Caco-2 (cell line): ENCODE measurements at regions of chr4 and their contacts with region 1.

Region 1: DNA sequence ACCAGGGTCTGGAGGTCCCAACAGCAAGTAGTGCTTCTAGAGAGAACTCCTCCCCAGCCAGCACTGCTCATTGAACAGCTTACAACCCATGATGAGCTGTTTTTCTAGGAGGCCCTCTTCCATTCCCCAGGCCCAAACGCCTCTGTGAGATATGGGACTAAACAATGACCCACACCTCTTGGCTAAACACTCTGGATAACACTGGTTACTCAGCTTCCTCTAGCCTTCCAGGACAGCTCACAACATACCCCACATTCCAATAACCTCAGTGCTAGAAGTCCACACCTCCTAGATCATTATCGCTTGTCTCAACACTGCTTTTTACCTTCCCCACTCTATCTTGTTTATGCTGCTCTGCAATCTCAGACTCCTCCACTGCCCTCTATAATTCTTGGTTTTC is 35.4 kb upstream of the PGRMC2 start:
- DNase-seq: peak; percentile 73 to 82
- H3K4me3 ChIP-seq: no peak overlapping the region
- H3K4me3 Mint-ChIP-seq: no peak overlapping the region
- H3K27ac Mint-ChIP-seq: no peak overlapping the region
- H3K4me1 ChIP-seq: peaks cover 43% of the 10 kb centered on the region
- H3K4me1 Mint-ChIP-seq: peaks cover 5% of the 10 kb centered on the region
- H3K27me3 ChIP-seq: no peaks in the 10 kb centered on the region
- H3K27me3 Mint-ChIP-seq: no peaks in the 10 kb centered on the region
- CTCF ChIP-seq: no peak

Region 2: DNA sequence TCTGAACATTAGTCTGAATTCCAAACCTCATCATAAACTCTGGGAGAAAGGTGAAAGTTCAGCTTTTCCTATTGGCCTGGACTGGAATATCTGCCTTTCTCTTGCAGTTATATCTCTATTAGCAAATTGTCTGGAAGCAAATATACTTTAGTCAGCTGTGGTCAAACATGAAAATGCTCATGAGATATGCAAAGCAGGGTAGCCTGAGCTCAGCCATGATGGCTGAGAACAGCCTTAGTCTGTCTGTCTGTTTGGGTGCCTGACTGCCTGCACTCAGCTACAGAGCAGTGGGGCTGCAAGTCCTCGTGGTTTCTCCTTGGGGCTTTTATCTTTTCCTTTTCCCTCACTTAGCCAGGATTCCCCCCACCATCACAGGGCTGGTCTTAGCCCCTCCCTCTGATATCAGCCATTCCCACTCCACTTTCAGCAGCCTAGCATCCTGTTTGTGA is 15.8 kb before region 1 on chr4:
- CTCF ChIA-PET with region 1: no interaction called
- POLR2A ChIA-PET with region 1: interaction called, 4 read pairs
- intact Hi-C with region 1: loop called (anchors 2 kb)
- DNase-seq: peak in 1 of 2 experiments; percentile 13
- H3K4me3 ChIP-seq: no peak overlapping the region
- H3K4me3 Mint-ChIP-seq: no peak overlapping the region
- H3K27ac Mint-ChIP-seq: peak overlapping the region; percentile 27
- H3K4me1 ChIP-seq: peaks cover 18% of the 10 kb centered on the region; the same call in 1 of the 2 replicates
- H3K4me1 Mint-ChIP-seq: peaks cover 10% of the 10 kb centered on the region
- H3K27me3 ChIP-seq: no peaks in the 10 kb centered on the region
- H3K27me3 Mint-ChIP-seq: no peaks in the 10 kb centered on the region
- CTCF ChIP-seq: no peak

Region 3: DNA sequence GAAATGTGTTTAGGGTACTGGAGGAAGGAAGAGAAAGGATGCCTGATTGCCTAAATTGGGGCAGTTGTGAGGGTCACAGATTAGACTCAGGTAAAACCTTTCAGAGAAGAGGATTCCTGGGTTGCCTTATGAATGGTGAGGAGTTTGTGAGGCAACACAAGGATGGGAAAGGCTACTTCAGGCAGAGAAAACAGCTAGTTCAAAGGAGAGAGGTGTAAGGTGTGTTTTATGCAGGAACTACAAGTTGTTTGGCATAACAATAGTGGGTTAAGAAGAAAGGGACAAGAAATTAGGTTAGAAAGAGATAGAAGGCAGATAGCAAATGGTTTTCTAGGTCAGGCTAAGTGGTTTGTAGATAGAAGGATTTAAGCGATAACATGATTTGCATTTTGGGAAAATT is 39.8 kb after region 1 on chr4:
- CTCF ChIA-PET with region 1: no interaction called
- POLR2A ChIA-PET with region 1: no interaction called
- intact Hi-C with region 1: no loop called
- DNase-seq: no peak
- H3K4me3 ChIP-seq: no peak overlapping the region
- H3K4me3 Mint-ChIP-seq: no peak overlapping the region
- H3K27ac Mint-ChIP-seq: no peak overlapping the region
- H3K4me1 ChIP-seq: peaks cover 16% of the 10 kb centered on the region
- H3K4me1 Mint-ChIP-seq: no peaks in the 10 kb centered on the region
- H3K27me3 ChIP-seq: no peaks in the 10 kb centered on the region
- H3K27me3 Mint-ChIP-seq: no peaks in the 10 kb centered on the region
- CTCF ChIP-seq: no peak

Region 4: GRCh38 chr4:128385683-128386304 is 62.8 kb after region 1 on chr4:
- CTCF ChIA-PET with region 1: no interaction called
- POLR2A ChIA-PET with region 1: no interaction called
- intact Hi-C with region 1: loop called (anchors 1 kb)
- DNase-seq: no peak
- H3K4me3 ChIP-seq: no peak overlapping the region
- H3K4me3 Mint-ChIP-seq: no peak overlapping the region
- H3K27ac Mint-ChIP-seq: no peak overlapping the region
- H3K4me1 ChIP-seq: peaks cover 32% of the 10 kb centered on the region
- H3K4me1 Mint-ChIP-seq: peaks cover 8% of the 10 kb centered on the region
- H3K27me3 ChIP-seq: no peaks in the 10 kb centered on the region
- H3K27me3 Mint-ChIP-seq: no peaks in the 10 kb centered on the region
- CTCF ChIP-seq: no peak

Region 5: DNA sequence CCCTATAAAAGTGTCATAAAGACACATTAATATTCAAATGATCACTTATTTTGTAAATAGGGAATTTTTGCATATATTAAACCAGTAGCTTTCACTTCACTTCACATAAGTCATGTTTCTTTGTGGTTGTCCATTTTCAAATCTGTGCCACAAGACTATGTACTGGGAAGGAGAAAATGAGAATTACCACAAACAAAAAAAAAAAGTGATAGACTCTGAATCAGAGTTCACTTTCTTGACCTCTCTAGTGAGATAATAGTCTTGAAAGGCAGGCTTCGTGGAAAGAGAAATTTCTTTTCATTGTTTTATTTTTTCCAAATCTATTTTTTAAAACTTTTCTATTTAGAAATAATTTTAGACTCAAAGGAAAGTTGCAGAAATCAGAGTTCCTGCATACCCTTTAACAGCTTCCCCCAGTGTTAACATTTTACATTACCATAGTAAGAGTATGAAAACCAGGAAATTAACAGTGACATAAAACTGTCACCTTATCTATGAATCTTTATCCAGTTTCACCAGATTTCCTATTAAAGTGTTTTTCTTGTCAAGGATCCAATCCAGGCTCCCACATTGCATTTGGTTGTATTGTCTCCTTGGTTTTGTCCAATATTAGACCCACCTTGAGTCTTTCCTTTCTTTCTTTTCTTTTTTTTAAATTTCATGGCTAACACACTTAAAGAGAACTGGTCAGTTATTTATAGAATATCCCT is 180.0 kb after region 1 on chr4:
- CTCF ChIA-PET with region 1: no interaction called
- POLR2A ChIA-PET with region 1: no interaction called
- intact Hi-C with region 1: no loop called
- DNase-seq: no peak
- H3K4me3 ChIP-seq: no peak overlapping the region
- H3K4me3 Mint-ChIP-seq: no peak overlapping the region
- H3K27ac Mint-ChIP-seq: no peak overlapping the region
- H3K4me1 ChIP-seq: no peaks in the 10 kb centered on the region
- H3K4me1 Mint-ChIP-seq: no peaks in the 10 kb centered on the region
- H3K27me3 ChIP-seq: no peaks in the 10 kb centered on the region
- H3K27me3 Mint-ChIP-seq: no peaks in the 10 kb centered on the region
- CTCF ChIP-seq: no peak